ENCODE measurements at regions of chr6 and their contacts with region 1.

Region 1: GRCh38 chr6:56595490-56596122 is 47.1 kb downstream of the DST start:
- DNase-seq: peak in 1 of 2 donors; percentile 37
- ATAC-seq: peak; percentile 71

Region 2: GRCh38 chr6:55963301-55963700 is 632.3 kb before region 1 on chr6:
- intact Hi-C with region 1: no loop called
- DNase-seq: no peak
- ATAC-seq: no peak

Region 3: DNA sequence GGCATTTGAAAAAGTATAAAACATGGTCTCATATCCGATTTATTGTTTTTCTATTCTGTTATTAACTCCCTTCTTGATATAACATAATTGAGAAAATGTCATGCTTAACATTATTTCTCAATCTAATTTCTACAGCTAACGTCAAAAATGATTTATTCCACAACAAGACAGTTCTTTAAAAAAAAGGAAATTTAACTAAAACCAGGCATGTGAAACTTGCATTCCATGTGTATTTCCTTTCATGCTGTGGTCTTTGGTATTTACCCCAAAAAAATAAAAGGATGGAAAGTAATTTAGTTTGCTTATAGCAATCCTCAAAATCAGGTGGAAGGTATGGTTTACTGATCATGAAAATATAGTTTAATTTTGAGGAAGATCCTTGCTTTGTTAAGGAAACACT is 491.0 kb before region 1 on chr6:
- intact Hi-C with region 1: no loop called
- DNase-seq: no peak
- ATAC-seq: no peak

Region 4: DNA sequence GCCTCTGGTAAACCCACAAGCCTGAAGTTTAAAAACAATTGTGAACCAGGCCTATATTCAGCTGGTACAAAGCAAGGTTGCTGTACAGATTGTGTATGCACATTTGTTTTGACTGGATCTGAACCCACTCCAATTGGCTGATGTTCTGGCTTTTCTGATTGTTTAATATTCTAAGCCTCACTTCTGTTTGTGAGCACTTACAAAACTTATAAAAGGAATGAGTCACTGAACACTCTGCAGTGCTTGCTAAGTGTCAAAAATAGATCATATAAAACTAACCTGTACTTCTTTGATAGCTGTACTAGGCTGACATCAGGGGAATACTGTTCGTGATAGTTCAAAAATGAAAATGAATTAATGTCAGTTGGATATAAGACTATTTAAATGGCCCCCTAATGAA is 360.4 kb before region 1 on chr6:
- intact Hi-C with region 1: no loop called
- DNase-seq: no peak
- ATAC-seq: no peak

Region 5: GRCh38 chr6:56359201-56359899 is 236.3 kb before region 1 on chr6:
- intact Hi-C with region 1: loop called (anchors 5 to 10 kb)
- DNase-seq: peak; percentile 33 to 56
- ATAC-seq: peak; percentile 83

Region 6: DNA sequence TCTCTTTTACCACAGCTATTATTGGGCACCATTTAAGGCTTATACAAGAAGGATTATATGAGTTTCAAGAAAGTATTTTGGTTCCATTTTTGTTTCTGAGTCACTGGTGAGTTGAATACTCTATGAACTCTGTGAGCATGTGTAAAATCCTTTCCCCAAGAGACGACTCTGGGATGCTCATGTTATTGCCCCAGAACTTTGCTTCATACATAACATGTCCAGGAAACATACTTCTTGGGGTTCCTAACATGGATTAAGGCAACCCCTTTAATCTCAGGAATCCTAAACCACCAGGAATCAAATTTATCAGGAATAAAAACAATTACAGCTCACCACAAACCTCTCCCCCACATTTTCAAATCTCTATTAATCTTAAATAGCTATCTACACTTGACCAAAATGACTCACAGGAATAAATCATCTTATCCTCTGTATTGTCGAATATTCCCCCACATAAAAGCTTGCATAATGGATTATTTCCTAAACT is 230.7 kb before region 1 on chr6:
- intact Hi-C with region 1: loop called in 1 of 2 experiments (anchors 5 kb)
- DNase-seq: no peak
- ATAC-seq: no peak

Measured in left colon (tissue), 2 donors.